ENCODE measurements at regions of chr2 and their contacts with region 1.

Region 1: GRCh38 chr2:47767880-47768609 is 14.9 kb upstream of the MSH6 start:
- DNase-seq: peak; percentile 32 to 82 (median 68)
- ATAC-seq: peak; percentile 93
- H3K4me3 ChIP-seq: no peak overlapping the region
- H3K4me3 Mint-ChIP-seq: peak overlapping the region in 7 of 10 donors; percentile 11 to 72 (median 49)
- H3K27ac ChIP-seq: no peak overlapping the region
- H3K27ac Mint-ChIP-seq: no peak overlapping the region
- H3K4me1 ChIP-seq: no peaks in the 10 kb centered on the region
- H3K4me1 Mint-ChIP-seq: peaks cover 0 to 8% (median 4%) of the 10 kb centered on the region in 7 donors
- H3K27me3 ChIP-seq: no peaks in the 10 kb centered on the region
- H3K27me3 Mint-ChIP-seq: peaks cover 0 to 5% (median 0%) of the 10 kb centered on the region in 5 donors

Region 2: DNA sequence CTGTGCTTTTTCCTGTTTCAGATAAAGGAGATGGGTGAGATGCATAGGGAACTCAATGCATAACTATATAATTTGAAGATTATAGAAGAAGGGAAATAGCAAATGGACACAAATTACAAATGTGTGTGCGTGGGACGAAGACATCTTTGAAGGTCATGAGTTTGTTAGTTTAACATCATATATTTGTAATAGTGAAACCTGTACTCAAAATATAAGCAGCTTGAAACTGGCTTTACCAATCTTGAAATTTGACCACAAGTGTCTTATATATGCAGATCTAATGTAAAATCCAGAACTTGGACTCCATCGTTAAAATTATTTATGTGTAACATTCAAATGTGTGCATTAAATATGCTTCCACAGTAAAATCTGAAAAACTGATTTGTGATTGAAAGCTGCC is 381.5 kb before region 1 on chr2:
- CTCF ChIA-PET with region 1: no interaction called
- POLR2A ChIA-PET with region 1: no interaction called
- intact Hi-C with region 1: loop called (anchors 1 to 5 kb)
- DNase-seq: no peak
- ATAC-seq: no peak
- H3K4me3 ChIP-seq: no peak overlapping the region
- H3K4me3 Mint-ChIP-seq: no peak overlapping the region
- H3K27ac ChIP-seq: no peak overlapping the region
- H3K27ac Mint-ChIP-seq: no peak overlapping the region
- H3K4me1 ChIP-seq: no peaks in the 10 kb centered on the region
- H3K4me1 Mint-ChIP-seq: peaks cover 0 to 4% (median 0%) of the 10 kb centered on the region in 7 donors
- H3K27me3 ChIP-seq: no peaks in the 10 kb centered on the region
- H3K27me3 Mint-ChIP-seq: peaks cover 0 to 20% (median 0%) of the 10 kb centered on the region in 5 donors

Region 3: GRCh38 chr2:47437287-47437686 is 330.8 kb before region 1 on chr2:
- CTCF ChIA-PET with region 1: interaction called, 3 read pairs
- POLR2A ChIA-PET with region 1: no interaction called
- intact Hi-C with region 1: loop called (anchors 1 kb)
- DNase-seq: no peak
- ATAC-seq: no peak
- H3K4me3 ChIP-seq: no peak overlapping the region
- H3K4me3 Mint-ChIP-seq: no peak overlapping the region
- H3K27ac ChIP-seq: no peak overlapping the region
- H3K27ac Mint-ChIP-seq: no peak overlapping the region
- H3K4me1 ChIP-seq: no peaks in the 10 kb centered on the region
- H3K4me1 Mint-ChIP-seq: peaks cover 0 to 3% (median 0%) of the 10 kb centered on the region in 7 donors
- H3K27me3 ChIP-seq: no peaks in the 10 kb centered on the region
- H3K27me3 Mint-ChIP-seq: no peaks in the 10 kb centered on the region

Region 4: GRCh38 chr2:47617028-47617427 is 151.0 kb before region 1 on chr2:
- CTCF ChIA-PET with region 1: no interaction called
- POLR2A ChIA-PET with region 1: no interaction called
- intact Hi-C with region 1: no loop called
- DNase-seq: no peak
- ATAC-seq: no peak
- H3K4me3 ChIP-seq: no peak overlapping the region
- H3K4me3 Mint-ChIP-seq: no peak overlapping the region
- H3K27ac ChIP-seq: no peak overlapping the region
- H3K27ac Mint-ChIP-seq: no peak overlapping the region
- H3K4me1 ChIP-seq: no peaks in the 10 kb centered on the region
- H3K4me1 Mint-ChIP-seq: no peaks in the 10 kb centered on the region
- H3K27me3 ChIP-seq: no peaks in the 10 kb centered on the region
- H3K27me3 Mint-ChIP-seq: no peaks in the 10 kb centered on the region

Region 5: DNA sequence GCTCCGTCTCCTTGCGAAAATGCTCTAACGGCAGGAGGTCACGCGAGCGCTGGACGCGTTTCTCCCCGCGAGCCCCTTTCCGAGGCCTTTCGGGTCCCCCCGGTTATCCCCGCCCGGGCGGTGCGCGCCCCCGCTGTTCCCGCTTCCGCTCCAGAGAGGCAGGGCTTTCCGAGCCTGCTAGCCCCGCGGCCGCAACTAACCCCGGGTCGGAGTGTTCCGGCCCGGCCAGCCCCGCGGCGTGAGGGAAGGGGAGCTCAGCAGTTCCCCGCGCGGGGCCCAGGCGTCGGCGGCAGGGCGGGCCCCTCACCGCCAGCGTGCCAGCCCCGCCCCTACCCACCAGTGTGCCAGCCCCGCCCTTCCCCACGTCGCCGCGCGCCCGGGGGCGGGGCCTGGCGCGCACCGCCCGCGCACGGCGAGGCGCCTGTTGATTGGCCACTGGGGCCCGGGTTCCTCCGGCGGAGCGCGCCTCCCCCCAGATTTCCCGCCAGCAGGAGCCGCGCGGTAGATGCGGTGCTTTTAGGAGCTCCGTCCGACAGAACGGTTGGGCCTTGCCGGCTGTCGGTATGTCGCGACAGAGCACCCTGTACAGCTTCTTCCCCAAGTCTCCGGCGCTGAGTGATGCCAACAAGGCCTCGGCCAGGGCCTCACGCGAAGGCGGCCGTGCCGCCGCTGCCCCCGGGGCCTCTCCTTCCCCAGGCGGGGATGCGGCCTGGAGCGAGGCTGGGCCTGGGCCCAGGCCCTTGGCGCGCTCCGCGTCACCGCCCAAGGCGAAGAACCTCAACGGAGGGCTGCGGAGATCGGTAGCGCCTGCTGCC is 14.8 kb after region 1 on chr2 and contains the start of gene MSH6:
- CTCF ChIA-PET with region 1: interaction called, 4 read pairs
- POLR2A ChIA-PET with region 1: no interaction called
- intact Hi-C with region 1: loop called in 1 of 2 experiments (anchors 1 kb)
- DNase-seq: peak; percentile 85 to 93 (median 92)
- ATAC-seq: peak; percentile 97
- H3K4me3 ChIP-seq: peak within 1 kb of the TSS; percentile 97
- H3K4me3 Mint-ChIP-seq: peak within 1 kb of the TSS; percentile 70 to 97 (median 92)
- H3K27ac ChIP-seq: peak within 1 kb of the TSS; percentile 94
- H3K27ac Mint-ChIP-seq: peak within 1 kb of the TSS; percentile 62 to 93 (median 87)
- H3K4me1 ChIP-seq: peaks cover 5 to 8% of the 10 kb centered on the region in 2 donors
- H3K4me1 Mint-ChIP-seq: peaks cover 7 to 39% (median 24%) of the 10 kb centered on the region in 7 donors
- H3K27me3 ChIP-seq: no peaks in the 10 kb centered on the region
- H3K27me3 Mint-ChIP-seq: no peaks in the 10 kb centered on the region
- total RNA-seq, gene MSH6: 20.5 to 82.3 (median 41.8) TPM